Activated CD4-positive, alpha-beta T cell treated with anti-CD3 and anti-CD28 coated beads, Interleukin-2, amount 10 ng/mL, durations not matched to agents 7 days and 5 days (primary cell): ENCODE measurements at regions of chr3 and their contacts with region 1.

Region 1: GRCh38 chr3:48635222-48636021 is at the start of gene SLC26A6:
- DNase-seq: peak; percentile 96
- H3K4me3 Mint-ChIP-seq: peak within 1 kb of the TSS; percentile 88
- H3K27ac Mint-ChIP-seq: peak within 1 kb of the TSS; percentile 90
- H3K4me1 Mint-ChIP-seq: peaks cover 20% of the 10 kb centered on the region
- H3K27me3 Mint-ChIP-seq: no peaks in the 10 kb centered on the region
- total RNA-seq, gene SLC26A6: 41.3 to 45.7 TPM

Region 2: GRCh38 chr3:48556793-48557626 is 78.4 kb before region 1 on chr3 and contains the start of gene PFKFB4:
- CTCF ChIA-PET with region 1: interaction called, 26 read pairs
- POLR2A ChIA-PET with region 1: no interaction called
- DNase-seq: peak; percentile 100
- H3K4me3 Mint-ChIP-seq: peak within 1 kb of the TSS; percentile 78
- H3K27ac Mint-ChIP-seq: peak within 1 kb of the TSS; percentile 88
- H3K4me1 Mint-ChIP-seq: peaks cover 64% of the 10 kb centered on the region
- H3K27me3 Mint-ChIP-seq: no peaks in the 10 kb centered on the region
- total RNA-seq, gene PFKFB4: 21.6 to 24.9 TPM

Region 3: GRCh38 chr3:48623851-48624547 is 11.4 kb before region 1 on chr3:
- CTCF ChIA-PET with region 1: interaction called, 40 read pairs
- POLR2A ChIA-PET with region 1: no interaction called
- DNase-seq: no peak
- H3K4me3 Mint-ChIP-seq: no peak overlapping the region
- H3K27ac Mint-ChIP-seq: peak overlapping the region; percentile 68
- H3K4me1 Mint-ChIP-seq: peaks cover 15% of the 10 kb centered on the region
- H3K27me3 Mint-ChIP-seq: no peaks in the 10 kb centered on the region

Region 4: DNA sequence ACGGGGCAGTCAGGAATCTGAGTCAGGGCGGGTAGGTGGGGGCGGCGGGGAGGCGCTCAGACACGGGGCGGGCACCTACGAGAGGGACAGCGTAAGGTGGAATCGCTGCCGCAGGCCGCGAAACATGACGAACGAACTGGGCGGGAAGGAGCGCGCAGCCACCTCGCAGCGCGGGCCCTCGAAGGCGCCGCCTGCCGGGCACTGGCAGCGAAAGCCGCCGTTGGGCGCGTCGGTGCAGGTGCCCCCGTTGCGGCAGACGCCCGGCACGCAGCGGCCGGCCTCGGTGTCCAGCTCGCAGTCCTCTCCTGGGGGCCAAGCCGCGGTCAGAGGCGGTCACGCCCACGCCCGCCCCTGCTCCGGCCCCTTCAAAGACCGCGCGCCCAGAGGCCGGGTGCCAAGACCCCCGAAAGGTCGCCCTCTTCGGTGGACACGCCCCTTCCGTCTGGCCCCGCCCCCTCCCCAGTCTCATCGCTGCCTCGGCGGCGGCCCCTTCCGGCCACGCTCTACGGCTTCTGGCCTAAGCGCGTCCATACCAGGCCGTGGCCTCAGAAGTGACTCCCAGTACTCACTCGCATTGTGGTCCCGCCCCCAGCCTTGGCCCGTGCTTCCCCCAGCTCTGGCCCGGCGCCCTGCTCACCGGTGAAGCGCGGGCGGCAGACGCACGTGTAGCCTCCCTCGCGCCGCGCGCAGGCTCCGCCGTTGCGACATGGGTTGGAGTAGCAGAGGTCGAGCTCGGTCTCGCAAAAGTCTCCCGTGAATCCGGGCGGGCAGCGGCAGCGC is 20.8 kb after region 1 on chr3:
- CTCF ChIA-PET with region 1: interaction called, 26 read pairs
- POLR2A ChIA-PET with region 1: no interaction called
- DNase-seq: peak; percentile 82
- H3K4me3 Mint-ChIP-seq: peak overlapping the region; percentile 70
- H3K27ac Mint-ChIP-seq: peak overlapping the region; percentile 89
- H3K4me1 Mint-ChIP-seq: peaks cover 25% of the 10 kb centered on the region
- H3K27me3 Mint-ChIP-seq: no peaks in the 10 kb centered on the region

Region 5: GRCh38 chr3:48663415-48664312 is 28.2 kb after region 1 on chr3:
- CTCF ChIA-PET with region 1: interaction called, 13 read pairs
- POLR2A ChIA-PET with region 1: no interaction called
- DNase-seq: peak; percentile 92
- H3K4me3 Mint-ChIP-seq: peak overlapping the region; percentile 78
- H3K27ac Mint-ChIP-seq: peak overlapping the region; percentile 82
- H3K4me1 Mint-ChIP-seq: peaks cover 22% of the 10 kb centered on the region
- H3K27me3 Mint-ChIP-seq: peaks cover 10% of the 10 kb centered on the region

Region 6: GRCh38 chr3:48898383-48899234 is 263.2 kb after region 1 on chr3 and contains the start of gene SLC25A20:
- CTCF ChIA-PET with region 1: no interaction called
- POLR2A ChIA-PET with region 1: no interaction called
- DNase-seq: peak; percentile 94
- H3K4me3 Mint-ChIP-seq: peak within 1 kb of the TSS; percentile 97
- H3K27ac Mint-ChIP-seq: peak within 1 kb of the TSS; percentile 97
- H3K4me1 Mint-ChIP-seq: peaks cover 55% of the 10 kb centered on the region
- H3K27me3 Mint-ChIP-seq: no peaks in the 10 kb centered on the region
- total RNA-seq, gene SLC25A20: 35.2 to 40.6 TPM